Heart left ventricle (tissue), 16 donors: ENCODE measurements at regions of chr7 and their contacts with region 1.

Region 1: GRCh38 chr7:95916573-95917297 is 144.4 kb downstream of the DYNC1I1 start:
- DNase-seq: peak; percentile 68 to 82 (median 70)
- ATAC-seq: peak; percentile 33 to 85 (median 70)
- H3K4me3 ChIP-seq: peak overlapping the region in 4 of 12 donors; percentile 4 to 35 (median 16)
- H3K27ac ChIP-seq: no peak overlapping the region
- H3K4me1 ChIP-seq: peaks cover 0 to 5% (median 0%) of the 10 kb centered on the region in 12 donors
- H3K27me3 ChIP-seq: no peaks in the 10 kb centered on the region
- CTCF ChIP-seq: peak; percentile 87 to 96 (median 92)
- POLR2A ChIP-seq: no peak

Region 2: DNA sequence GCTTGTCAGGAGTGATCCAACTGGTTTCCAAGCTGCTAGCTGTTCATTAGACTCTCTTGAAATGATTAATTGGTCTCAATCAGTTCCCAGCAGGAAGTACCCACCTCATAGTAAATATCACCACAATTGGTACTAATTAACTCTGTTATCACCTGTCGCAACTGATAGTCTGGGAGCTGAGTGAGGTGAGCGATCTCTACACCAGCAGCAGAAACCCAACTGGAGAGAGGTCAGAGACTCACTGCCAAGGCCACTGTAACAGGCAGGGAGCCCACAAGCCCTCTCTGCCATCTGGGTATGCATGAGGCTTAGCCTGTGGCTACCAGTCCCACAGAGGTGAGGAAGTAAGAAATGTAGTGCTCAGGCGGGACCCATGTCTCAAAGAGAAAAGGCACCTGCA is 101.1 kb after region 1 on chr7:
- intact Hi-C with region 1: loop called in 1 of 10 experiments (anchors 10 kb)
- DNase-seq: no peak
- ATAC-seq: no peak
- H3K4me3 ChIP-seq: no peak overlapping the region
- H3K27ac ChIP-seq: no peak overlapping the region
- H3K4me1 ChIP-seq: peaks cover 0 to 3% (median 0%) of the 10 kb centered on the region in 12 donors
- H3K27me3 ChIP-seq: no peaks in the 10 kb centered on the region
- CTCF ChIP-seq: no peak
- POLR2A ChIP-seq: no peak

Region 3: DNA sequence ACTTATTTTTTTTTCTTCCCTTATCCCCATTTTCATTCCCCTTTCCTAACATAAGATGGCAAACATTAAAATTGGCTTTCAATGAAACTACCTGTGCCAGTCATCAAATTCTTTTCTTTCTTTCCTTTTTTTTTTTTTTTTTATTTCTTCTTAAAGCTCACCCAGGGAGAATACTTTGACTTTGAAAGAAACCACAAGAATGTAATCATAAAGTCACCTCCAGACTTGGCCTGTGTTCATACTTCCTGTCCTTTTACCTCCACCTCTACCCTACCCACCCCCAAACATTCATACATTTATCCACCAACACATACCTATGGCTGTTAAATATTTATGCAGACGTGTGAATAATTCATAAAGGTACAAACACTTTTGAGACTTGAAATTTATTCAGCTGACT is 150.6 kb after region 1 on chr7:
- intact Hi-C with region 1: loop called in 2 of 10 experiments (anchors 5 to 10 kb)
- DNase-seq: no peak
- ATAC-seq: no peak
- H3K4me3 ChIP-seq: no peak overlapping the region
- H3K27ac ChIP-seq: no peak overlapping the region
- H3K4me1 ChIP-seq: no peaks in the 10 kb centered on the region
- H3K27me3 ChIP-seq: no peaks in the 10 kb centered on the region
- CTCF ChIP-seq: no peak
- POLR2A ChIP-seq: no peak

Region 4: GRCh38 chr7:96253441-96253840 is 336.7 kb after region 1 on chr7:
- intact Hi-C with region 1: no loop called
- DNase-seq: no peak
- ATAC-seq: no peak
- H3K4me3 ChIP-seq: no peak overlapping the region
- H3K27ac ChIP-seq: no peak overlapping the region
- H3K4me1 ChIP-seq: peaks cover 0 to 7% (median 0%) of the 10 kb centered on the region in 12 donors
- H3K27me3 ChIP-seq: no peaks in the 10 kb centered on the region
- CTCF ChIP-seq: no peak
- POLR2A ChIP-seq: no peak

Region 5: GRCh38 chr7:97027427-97028234 is 1110.9 kb after region 1 on chr7:
- intact Hi-C with region 1: loop called in 9 of 10 experiments (anchors 1 to 10 kb)
- DNase-seq: peak; percentile 62 to 78 (median 75)
- ATAC-seq: peak; percentile 59 to 93 (median 85)
- H3K4me3 ChIP-seq: peak overlapping the region in 11 of 12 donors; percentile 6 to 62 (median 47)
- H3K27ac ChIP-seq: no peak overlapping the region
- H3K4me1 ChIP-seq: peaks cover 4 to 35% (median 16%) of the 10 kb centered on the region in 12 donors
- H3K27me3 ChIP-seq: peaks cover 13 to 96% (median 44%) of the 10 kb centered on the region in 9 donors
- CTCF ChIP-seq: peak; percentile 72 to 93 (median 84)
- POLR2A ChIP-seq: no peak

Region 6: DNA sequence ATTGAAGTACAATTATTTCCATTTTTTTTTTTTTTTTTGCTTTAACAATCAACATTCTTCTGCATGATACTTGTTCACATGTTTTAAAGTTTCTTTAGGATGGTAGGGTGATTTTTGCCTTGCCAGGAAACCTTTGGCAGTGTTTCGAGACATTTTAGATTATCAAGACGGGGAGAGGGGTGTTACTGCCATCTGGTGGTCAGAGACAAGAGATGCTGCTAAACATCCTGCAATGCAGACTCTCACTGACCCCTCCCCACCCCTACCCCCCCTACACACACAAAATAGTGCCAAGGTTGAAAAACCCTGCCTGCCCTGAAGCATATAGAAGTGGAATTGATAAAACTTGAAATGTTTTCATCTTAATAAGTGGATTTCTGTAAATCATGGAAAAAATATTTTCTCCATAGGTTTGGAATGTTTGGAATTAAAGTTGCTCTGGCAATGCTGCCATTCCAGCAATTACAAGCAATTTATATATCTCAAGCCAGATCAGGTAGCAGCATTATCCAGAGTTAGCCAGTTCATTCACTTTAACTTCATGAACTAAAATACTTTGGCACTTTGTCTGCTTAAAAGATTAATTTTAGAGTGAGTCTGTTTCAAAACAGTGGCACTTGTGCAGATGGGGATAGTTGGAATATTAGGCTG is 1262.8 kb after region 1 on chr7:
- intact Hi-C with region 1: loop called in 1 of 10 experiments (anchors 5 kb)
- DNase-seq: peak in 4 of 5 donors; percentile 26 to 30 (median 28)
- ATAC-seq: peak in 2 of 4 donors; percentile 52 to 59
- H3K4me3 ChIP-seq: no peak overlapping the region
- H3K27ac ChIP-seq: no peak overlapping the region
- H3K4me1 ChIP-seq: peaks cover 0 to 3% (median 0%) of the 10 kb centered on the region in 12 donors
- H3K27me3 ChIP-seq: no peaks in the 10 kb centered on the region
- CTCF ChIP-seq: peak; percentile 66 to 88 (median 75)
- POLR2A ChIP-seq: no peak